Ascending aorta (tissue), 2 donors: ENCODE measurements at regions of chr6 and their contacts with region 1.

Region 1: GRCh38 chr6:155314092-155314772 is at the start of gene TFB1M:
- DNase-seq: peak; percentile 94 to 99
- H3K4me3 ChIP-seq: peak within 1 kb of the TSS; percentile 77 to 90
- H3K27ac ChIP-seq: peak within 1 kb of the TSS; percentile 79 to 84
- H3K4me1 ChIP-seq: peaks cover 0 to 3% of the 10 kb centered on the region in 2 donors
- H3K27me3 ChIP-seq: no peaks in the 10 kb centered on the region
- CTCF ChIP-seq: no peak
- total RNA-seq, gene TFB1M: 2.9 TPM

Region 2: DNA sequence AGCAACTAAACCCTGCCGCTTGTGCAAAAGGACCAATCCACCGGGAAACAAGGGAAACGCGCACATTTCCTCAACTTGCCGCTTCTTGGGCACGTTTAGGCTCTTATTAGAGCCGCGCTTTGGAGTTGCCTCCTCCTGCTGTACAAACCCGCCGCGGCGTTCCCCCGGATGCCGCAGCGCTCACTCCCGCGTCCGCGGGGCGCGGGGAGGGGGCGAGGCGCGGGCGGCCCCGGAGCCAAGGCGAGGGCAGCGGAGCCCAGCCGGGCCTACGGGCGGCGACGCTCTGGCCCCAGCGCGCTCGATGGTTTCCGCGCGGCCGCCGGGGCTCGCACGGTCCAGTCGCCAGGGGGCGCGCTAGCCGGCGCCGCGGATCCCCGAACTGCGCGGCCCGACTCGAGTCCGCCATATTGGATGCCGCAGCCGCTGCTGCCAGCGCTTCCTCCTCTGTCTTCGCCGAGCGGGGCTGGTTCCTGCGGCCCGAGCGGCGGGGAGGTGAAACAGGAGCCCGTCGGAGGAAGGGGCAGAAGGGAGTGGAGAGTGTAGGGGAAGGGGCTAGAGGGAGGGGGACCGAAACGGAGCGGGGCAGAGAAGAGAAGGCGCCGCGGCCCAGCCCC is 581.1 kb before region 1 on chr6 and contains the start of gene SCAF8:
- intact Hi-C with region 1: loop called (anchors 5 kb)
- DNase-seq: peak; percentile 13 to 88
- H3K4me3 ChIP-seq: peak within 1 kb of the TSS; percentile 85 to 97
- H3K27ac ChIP-seq: peak within 1 kb of the TSS; percentile 100
- H3K4me1 ChIP-seq: peaks cover 2 to 39% of the 10 kb centered on the region in 2 donors
- H3K27me3 ChIP-seq: no peaks in the 10 kb centered on the region
- CTCF ChIP-seq: peak; percentile 70 to 89 (median 71)
- total RNA-seq, gene SCAF8: 22.6 TPM

Region 3: GRCh38 chr6:155154158-155154830 is 159.9 kb before region 1 on chr6:
- intact Hi-C with region 1: no loop called
- DNase-seq: no peak
- H3K4me3 ChIP-seq: no peak overlapping the region
- H3K27ac ChIP-seq: no peak overlapping the region
- H3K4me1 ChIP-seq: peaks cover 0 to 14% of the 10 kb centered on the region in 2 donors
- H3K27me3 ChIP-seq: no peaks in the 10 kb centered on the region
- CTCF ChIP-seq: no peak

Region 4: DNA sequence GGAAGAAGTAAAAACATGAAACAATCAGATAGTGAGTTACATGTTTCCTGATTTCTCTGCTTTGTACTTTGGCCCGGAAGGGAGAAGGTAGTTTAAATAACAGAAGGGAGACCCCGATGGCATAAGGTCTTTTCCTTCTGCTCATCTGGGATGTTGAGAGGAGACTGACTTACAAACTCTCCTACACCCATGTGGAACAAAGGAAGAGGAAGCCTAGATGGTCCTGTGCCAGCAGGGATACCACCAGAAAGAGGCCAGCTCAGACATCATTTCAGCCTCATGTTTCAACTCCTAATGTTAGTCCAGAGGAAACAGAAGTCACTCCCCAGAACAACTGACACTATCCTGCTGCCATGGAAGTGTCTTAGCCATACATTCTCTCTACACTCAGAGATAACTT is 392.1 kb after region 1 on chr6:
- intact Hi-C with region 1: no loop called
- DNase-seq: no peak
- H3K4me3 ChIP-seq: no peak overlapping the region
- H3K27ac ChIP-seq: no peak overlapping the region
- H3K4me1 ChIP-seq: no peaks in the 10 kb centered on the region
- H3K27me3 ChIP-seq: no peaks in the 10 kb centered on the region
- CTCF ChIP-seq: no peak